HCT116 (cell line): ENCODE measurements at regions of chr5 and their contacts with region 1.

Region 1: GRCh38 chr5:88785391-88786219 is 97.4 kb downstream of the MEF2C start:
- DNase-seq: peak; percentile 96
- ATAC-seq: peak; percentile 88
- H3K4me3 ChIP-seq: peak overlapping the region; percentile 32 to 50
- H3K27ac ChIP-seq: peak overlapping the region; percentile 92
- H3K4me1 ChIP-seq: peaks cover 28 to 37% of the 10 kb centered on the region in 2 experiments
- H3K27me3 ChIP-seq: no peaks in the 10 kb centered on the region
- CTCF ChIP-seq: no peak
- POLR2A ChIP-seq: no peak
- RAD21 ChIP-seq: peak; percentile 25; the same call in 1 of the 2 replicates

Region 2: GRCh38 chr5:88883059-88883835 is 97.6 kb after region 1 on chr5 and contains the start of gene MEF2C:
- CTCF ChIA-PET with region 1: no interaction called
- POLR2A ChIA-PET with region 1: no interaction called
- RAD21 ChIA-PET with region 1: no interaction called
- intact Hi-C with region 1: loop called (anchors 5 kb)
- DNase-seq: peak; percentile 56
- ATAC-seq: peak; percentile 70
- H3K4me3 ChIP-seq: peak within 1 kb of the TSS; percentile 61 to 65
- H3K27ac ChIP-seq: peak within 1 kb of the TSS; percentile 56
- H3K4me1 ChIP-seq: peaks cover 12 to 28% of the 10 kb centered on the region in 2 experiments
- H3K27me3 ChIP-seq: no peaks in the 10 kb centered on the region
- CTCF ChIP-seq: no peak
- POLR2A ChIP-seq: peak; percentile 47
- RAD21 ChIP-seq: no peak
- total RNA-seq, gene MEF2C: 13.0 TPM